ENCODE measurements at regions of chr1 and their contacts with region 1.

Region 1: GRCh38 chr1:160291248-160292220 is 6.6 kb upstream of the PEX19 start:
- DNase-seq: peak; percentile 64
- CTCF ChIP-seq: peak; percentile 75

Region 2: GRCh38 chr1:160193091-160193819 is 98.3 kb before region 1 on chr1:
- CTCF ChIA-PET with region 1: interaction called, 126 read pairs
- POLR2A ChIA-PET with region 1: no interaction called
- DNase-seq: peak; percentile 79
- CTCF ChIP-seq: peak; percentile 98

Region 3: DNA sequence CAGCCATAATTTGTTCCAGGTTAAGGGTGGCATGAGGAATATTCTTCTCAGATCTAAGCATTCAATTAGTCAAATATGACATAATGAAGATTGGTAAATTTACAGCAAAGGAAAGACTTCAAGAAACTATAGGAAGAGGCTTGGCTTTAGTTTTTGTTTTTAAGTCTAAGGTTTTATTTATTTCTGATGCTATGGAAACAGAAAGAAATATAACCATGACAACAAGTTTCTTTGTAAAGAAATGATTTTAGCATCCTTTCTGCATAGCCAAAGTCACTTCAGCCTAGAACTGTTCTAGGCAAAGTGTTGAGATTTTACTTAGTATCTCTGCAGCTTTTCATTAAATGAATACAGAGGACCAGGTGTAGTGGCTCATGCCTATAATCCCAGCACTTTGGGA is 58.6 kb before region 1 on chr1:
- CTCF ChIA-PET with region 1: interaction called, 14 read pairs
- POLR2A ChIA-PET with region 1: no interaction called
- DNase-seq: no peak
- CTCF ChIP-seq: no peak

Region 4: GRCh38 chr1:160261893-160262794 is 29.4 kb before region 1 on chr1 and contains the start of gene DCAF8:
- CTCF ChIA-PET with region 1: interaction called, 56 read pairs
- POLR2A ChIA-PET with region 1: no interaction called
- DNase-seq: peak; percentile 95
- CTCF ChIP-seq: no peak

Region 5: DNA sequence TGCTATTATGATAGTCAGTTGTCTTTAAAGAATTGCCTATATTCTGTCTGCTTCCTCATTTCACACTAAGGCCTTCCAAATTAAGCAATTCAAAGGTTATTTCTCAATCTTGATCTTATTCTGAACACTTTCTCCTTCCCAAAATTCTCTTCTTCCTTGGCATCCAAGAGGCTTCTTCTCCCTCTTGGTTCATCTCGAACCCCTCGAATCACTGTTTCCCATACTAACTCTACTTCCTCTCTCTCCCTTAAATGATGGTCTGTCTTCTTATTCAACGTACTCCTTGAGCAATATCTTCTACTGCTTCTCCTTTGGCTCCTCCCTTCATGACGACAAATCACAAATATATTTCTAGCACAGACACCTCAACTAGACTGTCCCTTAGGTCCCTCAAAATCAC is 47.0 kb after region 1 on chr1:
- CTCF ChIA-PET with region 1: interaction called, 38 read pairs
- POLR2A ChIA-PET with region 1: no interaction called
- DNase-seq: no peak
- CTCF ChIP-seq: no peak

Region 6: GRCh38 chr1:160376525-160377131 is 85.1 kb after region 1 on chr1:
- CTCF ChIA-PET with region 1: interaction called, 17 read pairs
- POLR2A ChIA-PET with region 1: no interaction called
- DNase-seq: peak; percentile 73
- CTCF ChIP-seq: peak; percentile 91

Measured in GM10248 (cell line).